ENCODE measurements at regions of chr2 and their contacts with region 1.

Region 1: DNA sequence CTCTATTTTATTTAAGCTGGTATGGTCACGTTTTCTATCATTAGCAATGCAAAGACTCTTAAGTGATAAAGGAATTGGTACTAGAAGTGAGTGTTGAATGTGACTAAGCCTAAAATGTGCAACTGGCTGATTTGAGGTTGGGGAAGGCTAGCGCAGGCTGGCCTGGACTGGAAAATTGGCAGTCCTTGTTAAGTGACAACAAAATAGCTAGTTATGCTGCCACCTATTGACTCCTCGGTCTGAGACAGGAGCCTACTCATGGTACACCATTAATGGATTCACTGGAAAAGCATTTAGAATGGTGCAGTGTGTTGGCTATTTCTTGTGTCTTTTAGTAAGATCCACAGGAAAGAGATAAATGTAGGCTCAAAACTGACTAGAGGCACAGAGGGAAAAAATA is 5.7 kb upstream of the WIPF1 start:
- DNase-seq: peak; percentile 79
- ATAC-seq: peak; percentile 61
- H3K4me3 Mint-ChIP-seq: no peak overlapping the region
- H3K27ac Mint-ChIP-seq: peak overlapping the region; percentile 77
- H3K4me1 Mint-ChIP-seq: peaks cover 91% of the 10 kb centered on the region
- H3K27me3 Mint-ChIP-seq: no peaks in the 10 kb centered on the region
- CTCF ChIP-seq: peak; percentile 76

Region 2: GRCh38 chr2:174615871-174616436 is 12.7 kb after region 1 on chr2:
- CTCF ChIA-PET with region 1: interaction called, 24 read pairs
- POLR2A ChIA-PET with region 1: interaction called, 179 read pairs
- intact Hi-C with region 1: no loop called
- DNase-seq: no peak
- ATAC-seq: peak; percentile 41
- H3K4me3 Mint-ChIP-seq: peak overlapping the region; percentile 11
- H3K27ac Mint-ChIP-seq: peak overlapping the region; percentile 93
- H3K4me1 Mint-ChIP-seq: peaks cover 86% of the 10 kb centered on the region
- H3K27me3 Mint-ChIP-seq: no peaks in the 10 kb centered on the region
- CTCF ChIP-seq: no peak